ENCODE measurements at regions of chr17 and their contacts with region 1.

Region 1: GRCh38 chr17:16438557-16439302 is 23.4 kb downstream of the TRPV2 start:
- DNase-seq: peak; percentile 97
- ATAC-seq: peak; percentile 92
- H3K4me3 Mint-ChIP-seq: peak overlapping the region; percentile 96
- H3K27ac Mint-ChIP-seq: peak overlapping the region; percentile 97
- H3K4me1 Mint-ChIP-seq: peaks cover 43% of the 10 kb centered on the region
- H3K27me3 Mint-ChIP-seq: no peaks in the 10 kb centered on the region
- CTCF ChIP-seq: no peak

Region 2: GRCh38 chr17:16285957-16286640 is 152.6 kb before region 1 on chr17:
- CTCF ChIA-PET with region 1: no interaction called
- POLR2A ChIA-PET with region 1: interaction called, 3 read pairs
- intact Hi-C with region 1: loop called (anchors 5 kb)
- DNase-seq: peak; percentile 95
- ATAC-seq: peak; percentile 95
- H3K4me3 Mint-ChIP-seq: peak overlapping the region; percentile 71
- H3K27ac Mint-ChIP-seq: peak overlapping the region; percentile 98
- H3K4me1 Mint-ChIP-seq: peaks cover 55% of the 10 kb centered on the region
- H3K27me3 Mint-ChIP-seq: no peaks in the 10 kb centered on the region
- CTCF ChIP-seq: peak; percentile 28

Region 3: DNA sequence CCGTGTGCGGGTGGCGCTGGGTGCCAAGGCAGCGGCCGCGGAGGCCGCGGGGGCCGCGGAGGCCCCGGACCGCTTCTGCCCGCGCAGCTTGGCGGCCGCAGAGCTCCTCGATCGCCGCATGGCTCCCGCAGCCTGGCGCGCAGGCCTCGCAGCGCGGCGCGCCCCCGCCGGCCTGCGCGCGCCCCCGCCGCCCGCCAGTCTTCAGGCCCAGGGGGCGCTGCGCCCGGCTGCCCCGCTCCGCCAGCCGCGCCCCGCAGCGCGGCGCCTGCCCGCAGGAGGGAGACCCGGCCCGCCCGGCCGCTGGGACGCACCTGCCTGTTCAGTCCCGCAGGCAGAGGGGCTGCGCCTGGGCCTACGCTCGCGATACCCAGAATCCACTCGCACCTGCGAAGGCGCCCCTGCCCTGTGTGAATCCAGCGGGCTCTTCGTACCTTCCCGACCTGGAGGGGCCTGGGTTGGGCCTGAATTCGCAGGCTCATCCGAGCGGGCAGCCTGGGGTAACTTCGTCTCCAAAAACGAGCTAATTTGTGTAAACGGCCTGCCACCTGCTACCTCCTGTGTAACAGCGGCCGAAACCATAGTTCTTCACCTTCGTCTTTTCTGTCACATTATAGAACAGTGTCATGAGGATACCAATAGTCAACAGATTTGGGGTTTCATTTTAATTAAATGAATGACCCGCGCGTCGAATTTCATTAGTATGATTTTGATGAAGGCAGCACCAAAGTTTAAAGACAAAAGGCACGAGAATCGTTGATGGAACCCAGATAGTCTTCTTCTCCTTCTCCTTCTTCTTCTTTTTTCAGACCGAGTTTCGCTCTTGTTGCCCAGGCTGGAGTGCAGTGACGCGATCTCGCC is 85.2 kb before region 1 on chr17 and contains the start of gene CENPV:
- CTCF ChIA-PET with region 1: interaction called, 7 read pairs
- POLR2A ChIA-PET with region 1: interaction called, 30 read pairs
- intact Hi-C with region 1: no loop called
- DNase-seq: peak; percentile 66
- ATAC-seq: peak; percentile 82
- H3K4me3 Mint-ChIP-seq: peak within 1 kb of the TSS; percentile 97
- H3K27ac Mint-ChIP-seq: peak within 1 kb of the TSS; percentile 93
- H3K4me1 Mint-ChIP-seq: peaks cover 18% of the 10 kb centered on the region
- H3K27me3 Mint-ChIP-seq: no peaks in the 10 kb centered on the region
- CTCF ChIP-seq: peak; percentile 9
- total RNA-seq, gene CENPV: 139 to 142 TPM

Region 4: DNA sequence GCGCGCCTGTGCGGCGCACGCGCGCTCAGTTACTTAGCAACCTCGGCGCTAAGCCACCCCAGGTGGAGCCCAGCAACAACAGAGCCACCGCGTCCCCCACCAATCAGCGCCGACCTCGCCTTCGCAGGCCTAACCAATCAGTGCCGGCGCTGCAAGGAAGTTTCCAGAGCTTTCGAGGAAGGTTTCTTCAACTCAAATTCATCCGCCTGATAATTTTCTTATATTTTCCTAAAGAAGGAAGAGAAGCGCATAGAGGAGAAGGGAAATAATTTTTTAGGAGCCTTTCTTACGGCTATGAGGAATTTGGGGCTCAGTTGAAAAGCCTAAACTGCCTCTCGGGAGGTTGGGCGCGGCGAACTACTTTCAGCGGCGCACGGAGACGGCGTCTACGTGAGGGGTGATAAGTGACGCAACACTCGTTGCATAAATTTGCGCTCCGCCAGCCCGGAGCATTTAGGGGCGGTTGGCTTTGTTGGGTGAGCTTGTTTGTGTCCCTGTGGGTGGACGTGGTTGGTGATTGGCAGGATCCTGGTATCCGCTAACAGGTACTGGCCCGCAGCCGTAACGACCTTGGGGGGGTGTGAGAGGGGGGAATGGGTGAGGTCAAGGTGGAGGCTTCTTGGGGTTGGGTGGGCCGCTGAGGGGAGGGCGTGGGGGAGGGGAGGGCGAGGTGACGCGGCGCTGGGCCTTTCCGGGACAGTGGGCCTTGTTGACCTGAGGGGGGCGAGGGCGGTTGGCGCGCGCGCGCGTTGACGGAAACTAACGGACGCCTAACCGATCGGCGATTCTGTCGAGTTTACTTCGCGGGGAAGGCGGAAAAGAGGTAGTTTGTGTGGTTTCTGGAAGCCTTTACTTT is 57.9 kb before region 1 on chr17 and contains the start of gene UBB:
- CTCF ChIA-PET with region 1: no interaction called
- POLR2A ChIA-PET with region 1: interaction called, 39 read pairs
- intact Hi-C with region 1: loop called (anchors 2 kb)
- DNase-seq: peak; percentile 97
- ATAC-seq: peak; percentile 95
- H3K4me3 Mint-ChIP-seq: peak within 1 kb of the TSS; percentile 94
- H3K27ac Mint-ChIP-seq: peak within 1 kb of the TSS; percentile 95
- H3K4me1 Mint-ChIP-seq: peaks cover 33% of the 10 kb centered on the region
- H3K27me3 Mint-ChIP-seq: no peaks in the 10 kb centered on the region
- CTCF ChIP-seq: no peak
- total RNA-seq, gene UBB: 1,334 to 1,337 TPM

Region 5: DNA sequence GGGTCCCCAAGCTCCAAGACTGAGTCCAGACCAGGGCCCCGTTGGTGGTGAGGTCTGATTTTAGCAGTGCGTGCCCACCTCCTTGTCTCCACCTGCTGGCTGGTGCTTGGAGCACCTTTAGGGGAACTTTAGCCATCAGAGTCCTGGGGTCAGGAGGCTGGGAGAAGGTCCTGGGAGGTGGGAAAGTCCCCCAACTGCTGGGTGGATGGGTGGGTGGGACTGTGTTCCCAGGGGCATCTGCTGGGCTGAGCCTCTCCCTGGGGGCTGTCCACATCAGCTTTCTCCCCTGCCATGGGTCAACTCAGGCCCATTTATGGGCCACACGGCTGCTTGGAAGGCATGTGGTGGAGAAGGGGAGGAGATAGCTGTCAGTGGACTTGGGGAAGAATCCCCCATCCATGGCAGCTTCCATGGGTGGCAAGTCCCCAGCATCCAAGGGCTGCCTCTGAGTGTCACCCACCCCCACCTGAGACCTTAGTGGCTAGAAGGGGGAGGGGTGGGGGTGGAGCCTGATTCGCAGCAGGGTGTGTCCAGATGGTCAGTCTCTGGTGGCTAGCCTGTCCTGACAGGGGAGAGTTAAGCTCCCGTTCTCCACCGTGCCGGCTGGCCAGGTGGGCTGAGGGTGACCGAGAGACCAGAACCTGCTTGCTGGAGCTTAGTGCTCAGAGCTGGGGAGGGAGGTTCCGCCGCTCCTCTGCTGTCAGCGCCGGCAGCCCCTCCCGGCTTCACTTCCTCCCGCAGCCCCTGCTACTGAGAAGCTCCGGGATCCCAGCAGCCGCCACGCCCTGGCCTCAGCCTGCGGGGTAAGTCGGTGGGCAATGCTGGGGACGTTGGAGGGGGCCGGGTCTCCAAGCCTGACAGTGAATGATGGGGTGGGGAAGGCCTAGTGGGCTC is 23.5 kb before region 1 on chr17 and contains the start of gene TRPV2:
- CTCF ChIA-PET with region 1: interaction called, 19 read pairs
- POLR2A ChIA-PET with region 1: interaction called, 200 read pairs
- intact Hi-C with region 1: no loop called
- DNase-seq: peak; percentile 79
- ATAC-seq: peak; percentile 19
- H3K4me3 Mint-ChIP-seq: peak within 1 kb of the TSS; percentile 100
- H3K27ac Mint-ChIP-seq: peak within 1 kb of the TSS; percentile 99
- H3K4me1 Mint-ChIP-seq: peaks cover 49% of the 10 kb centered on the region
- H3K27me3 Mint-ChIP-seq: no peaks in the 10 kb centered on the region
- CTCF ChIP-seq: peak; percentile 65
- total RNA-seq, gene TRPV2: 44.6 to 47.6 TPM

Region 6: GRCh38 chr17:16428098-16428882 is 10.4 kb before region 1 on chr17:
- CTCF ChIA-PET with region 1: interaction called, 39 read pairs
- POLR2A ChIA-PET with region 1: interaction called, 43 read pairs
- intact Hi-C with region 1: no loop called
- DNase-seq: peak; percentile 75
- ATAC-seq: peak; percentile 91
- H3K4me3 Mint-ChIP-seq: no peak overlapping the region
- H3K27ac Mint-ChIP-seq: peak overlapping the region; percentile 42
- H3K4me1 Mint-ChIP-seq: peaks cover 7% of the 10 kb centered on the region
- H3K27me3 Mint-ChIP-seq: no peaks in the 10 kb centered on the region
- CTCF ChIP-seq: peak; percentile 59

Region 7: GRCh38 chr17:16453493-16453851 is 14.7 kb after region 1 on chr17:
- CTCF ChIA-PET with region 1: interaction called, 12 read pairs
- POLR2A ChIA-PET with region 1: interaction called, 22 read pairs
- intact Hi-C with region 1: no loop called
- DNase-seq: no peak
- ATAC-seq: no peak
- H3K4me3 Mint-ChIP-seq: no peak overlapping the region
- H3K27ac Mint-ChIP-seq: no peak overlapping the region
- H3K4me1 Mint-ChIP-seq: peaks cover 16% of the 10 kb centered on the region
- H3K27me3 Mint-ChIP-seq: no peaks in the 10 kb centered on the region
- CTCF ChIP-seq: peak; percentile 13

Measured in activated CD8-positive, alpha-beta T cell treated with anti-CD3 and anti-CD28 coated beads for 36 hours (primary cell).